ENCODE measurements at regions of chr12 and their contacts with region 1.

Region 1: DNA sequence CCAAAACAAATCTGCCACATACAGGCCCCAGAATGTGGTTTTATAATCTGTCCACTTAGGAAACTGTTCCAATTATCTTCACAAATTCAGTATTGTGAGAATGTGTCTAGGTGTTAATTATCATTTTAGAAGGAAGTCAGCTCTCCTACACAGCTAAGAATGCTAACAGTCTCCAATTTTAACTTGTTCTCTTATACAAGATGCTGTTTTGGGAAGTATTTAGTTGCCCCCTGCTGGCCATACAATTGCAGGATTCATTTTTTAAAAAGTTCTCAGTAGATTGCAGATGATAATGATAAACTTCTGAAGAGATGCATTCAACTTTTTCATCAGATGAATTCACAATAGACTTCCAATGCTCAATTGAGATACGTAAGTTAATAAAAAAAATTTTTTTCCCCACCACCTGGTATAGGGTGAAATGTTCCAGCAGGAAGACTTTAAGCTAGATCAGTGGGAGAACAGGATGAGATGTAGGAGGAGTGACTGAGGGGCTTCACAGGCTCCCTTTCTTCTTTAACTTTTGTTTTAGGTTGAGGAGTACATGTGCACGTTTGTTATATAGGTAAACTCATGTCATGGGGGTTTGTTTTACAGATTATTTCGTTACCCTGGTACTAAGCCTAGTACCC is 27.3 kb upstream of the OSBPL8 start:
- DNase-seq: peak; percentile 27
- ATAC-seq: peak; percentile 59; the same call in 1 of the 2 replicates
- H3K4me3 ChIP-seq: no peak overlapping the region
- H3K27ac ChIP-seq: no peak overlapping the region
- H3K4me1 ChIP-seq: peaks cover 6 to 9% of the 10 kb centered on the region in 2 experiments
- H3K27me3 ChIP-seq: no peaks in the 10 kb centered on the region
- CTCF ChIP-seq: peak; percentile 50 to 83 (median 63); a peak in 5 of 6 replicates
- POLR2A ChIP-seq: no peak
- RAD21 ChIP-seq: peak; percentile 83

Region 2: DNA sequence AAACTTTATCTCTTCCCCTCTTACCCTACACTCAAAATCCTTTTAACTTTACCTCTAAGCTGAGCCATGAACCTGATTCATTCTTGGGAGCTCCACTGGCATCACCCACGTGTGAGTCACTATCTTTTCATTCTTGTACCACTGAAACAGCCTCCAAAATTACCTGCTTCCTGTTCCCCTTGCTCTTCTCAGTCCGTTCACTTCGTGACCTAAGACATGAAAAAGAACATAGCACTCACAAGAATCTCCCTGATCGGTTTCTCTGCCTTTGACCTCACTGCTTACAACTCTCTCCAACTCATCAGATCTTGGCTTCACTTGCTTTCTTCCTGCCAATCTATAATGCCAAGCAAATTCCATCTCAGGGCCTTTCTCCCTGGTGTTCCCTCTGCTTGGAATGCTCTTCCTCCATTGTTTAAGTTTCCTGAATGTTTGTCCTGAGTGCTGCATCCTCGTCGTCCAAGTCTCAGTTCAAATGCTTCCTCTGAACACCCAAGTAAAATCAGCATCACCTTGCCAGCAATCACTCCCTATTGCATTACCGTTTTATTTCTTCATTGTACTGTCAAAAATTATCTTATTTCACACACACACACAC is 1097.2 kb before region 1 on chr12:
- CTCF ChIA-PET with region 1: interaction called, 5 read pairs
- POLR2A ChIA-PET with region 1: no interaction called
- RAD21 ChIA-PET with region 1: no interaction called
- intact Hi-C with region 1: loop called (anchors 5 kb)
- DNase-seq: peak; percentile 62
- ATAC-seq: peak; percentile 64
- H3K4me3 ChIP-seq: peak overlapping the region in 1 of 2 experiments; percentile 9; a peak in 1 of 4 replicates
- H3K27ac ChIP-seq: peak overlapping the region; percentile 82
- H3K4me1 ChIP-seq: peaks cover 27 to 50% of the 10 kb centered on the region in 2 experiments
- H3K27me3 ChIP-seq: no peaks in the 10 kb centered on the region
- CTCF ChIP-seq: no peak
- POLR2A ChIP-seq: no peak
- RAD21 ChIP-seq: no peak